AG04449 (cell line): ENCODE measurements at regions of chr7 and their contacts with region 1.

Region 1: GRCh38 chr7:93231799-93232672 is at the start of gene VPS50:
- DNase-seq: peak; percentile 68
- H3K4me3 ChIP-seq: peak within 1 kb of the TSS; percentile 92
- CTCF ChIP-seq: no peak

Region 2: GRCh38 chr7:92768501-92769393 is 463.3 kb before region 1 on chr7:
- CTCF ChIA-PET with region 1: no interaction called
- POLR2A ChIA-PET with region 1: no interaction called
- DNase-seq: no peak
- H3K4me3 ChIP-seq: no peak overlapping the region
- CTCF ChIP-seq: no peak

Region 3: GRCh38 chr7:93092757-93093370 is 139.2 kb before region 1 on chr7:
- CTCF ChIA-PET with region 1: interaction called, 129 read pairs
- POLR2A ChIA-PET with region 1: no interaction called
- DNase-seq: peak; percentile 21
- H3K4me3 ChIP-seq: no peak overlapping the region
- CTCF ChIP-seq: peak; percentile 49

Region 4: DNA sequence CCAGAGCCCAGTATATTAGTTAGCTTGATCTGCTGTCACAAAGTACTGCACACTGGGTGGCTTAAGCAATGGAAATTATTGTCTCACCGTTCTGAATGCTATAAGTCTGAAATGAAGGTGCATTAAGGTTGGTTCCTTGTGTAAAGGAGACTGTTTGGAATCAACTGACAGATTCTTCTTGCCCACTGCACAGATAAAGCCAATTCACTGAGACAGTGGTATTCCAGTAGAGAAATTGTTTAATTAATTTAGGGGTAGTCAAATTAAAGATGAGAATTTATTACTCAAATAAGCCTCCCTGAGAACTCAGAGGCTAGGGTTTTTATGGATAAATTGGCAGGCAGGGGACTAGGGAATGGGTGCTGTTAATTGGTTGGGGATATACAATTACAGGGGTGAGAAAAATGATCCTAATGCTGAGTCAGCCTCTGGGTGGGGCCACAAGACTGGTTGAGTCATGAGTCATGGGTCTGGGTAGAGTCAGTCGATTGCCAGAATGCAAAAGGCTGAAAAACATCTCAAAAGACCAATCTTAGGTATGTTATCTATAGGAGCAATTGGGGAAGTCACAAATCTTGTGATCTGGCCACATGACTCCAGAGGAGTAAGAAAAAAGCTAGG is 60.3 kb before region 1 on chr7:
- CTCF ChIA-PET with region 1: interaction called, 13 read pairs
- POLR2A ChIA-PET with region 1: no interaction called
- DNase-seq: no peak
- H3K4me3 ChIP-seq: no peak overlapping the region
- CTCF ChIP-seq: no peak

Region 5: GRCh38 chr7:93178212-93178611 is 53.8 kb before region 1 on chr7:
- CTCF ChIA-PET with region 1: interaction called, 33 read pairs
- POLR2A ChIA-PET with region 1: no interaction called
- DNase-seq: no peak
- H3K4me3 ChIP-seq: no peak overlapping the region
- CTCF ChIP-seq: no peak

Region 6: DNA sequence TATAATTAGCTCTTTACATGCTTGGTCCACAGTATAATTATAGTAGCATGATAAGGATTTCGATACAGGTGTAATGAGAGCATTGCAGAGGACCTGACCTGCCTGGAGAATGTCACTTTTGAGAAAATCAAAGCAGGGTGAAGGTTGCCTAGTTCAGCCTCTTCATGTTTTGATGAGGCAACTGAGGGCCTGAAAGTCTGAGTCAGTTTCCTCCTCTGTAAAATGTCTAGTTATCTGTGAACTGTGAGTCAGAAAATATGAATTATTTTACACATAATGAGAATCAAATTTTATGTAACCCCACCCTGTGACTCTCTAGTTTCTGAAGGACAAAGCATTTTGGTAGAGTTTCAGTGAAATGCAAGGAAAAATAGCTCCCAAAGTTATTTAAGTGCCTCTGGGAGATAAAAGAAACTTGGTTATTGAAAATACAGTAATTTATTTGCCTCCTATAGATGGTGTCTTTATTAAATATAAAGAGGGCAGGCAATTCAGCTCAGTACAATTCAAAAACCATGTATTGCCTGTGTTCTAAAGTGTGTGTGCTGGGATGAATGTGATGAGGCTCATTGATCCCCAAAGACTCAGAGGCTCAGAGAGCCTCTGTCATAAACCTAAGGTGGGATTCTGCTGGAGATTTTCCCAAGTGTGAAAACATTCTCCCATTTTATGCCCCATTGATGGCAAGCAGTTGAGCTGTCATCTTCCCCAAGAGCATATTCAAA is 46.6 kb before region 1 on chr7:
- CTCF ChIA-PET with region 1: interaction called, 33 read pairs
- POLR2A ChIA-PET with region 1: no interaction called
- DNase-seq: no peak
- H3K4me3 ChIP-seq: no peak overlapping the region
- CTCF ChIP-seq: no peak

Region 7: DNA sequence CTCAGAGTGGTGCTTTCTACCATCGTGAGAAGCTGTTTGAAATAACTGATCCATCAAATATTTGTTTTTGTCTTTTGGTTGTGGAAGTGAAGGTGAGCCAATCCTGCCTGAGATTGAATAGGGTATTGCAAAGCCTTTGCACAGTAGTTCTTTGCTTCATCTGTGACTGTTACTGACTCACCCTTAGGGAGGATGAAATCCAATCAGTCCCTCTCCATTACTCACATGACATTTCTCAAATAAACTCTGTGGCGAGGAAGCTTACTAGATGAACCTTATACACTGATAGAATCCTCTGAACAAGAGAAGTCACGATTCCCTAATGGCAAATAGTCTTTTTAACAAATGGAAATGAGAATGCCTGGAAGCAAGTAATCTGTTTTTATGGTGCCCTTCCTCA is 37.6 kb before region 1 on chr7:
- CTCF ChIA-PET with region 1: interaction called, 19 read pairs
- POLR2A ChIA-PET with region 1: no interaction called
- DNase-seq: no peak
- H3K4me3 ChIP-seq: no peak overlapping the region
- CTCF ChIP-seq: no peak

Region 8: DNA sequence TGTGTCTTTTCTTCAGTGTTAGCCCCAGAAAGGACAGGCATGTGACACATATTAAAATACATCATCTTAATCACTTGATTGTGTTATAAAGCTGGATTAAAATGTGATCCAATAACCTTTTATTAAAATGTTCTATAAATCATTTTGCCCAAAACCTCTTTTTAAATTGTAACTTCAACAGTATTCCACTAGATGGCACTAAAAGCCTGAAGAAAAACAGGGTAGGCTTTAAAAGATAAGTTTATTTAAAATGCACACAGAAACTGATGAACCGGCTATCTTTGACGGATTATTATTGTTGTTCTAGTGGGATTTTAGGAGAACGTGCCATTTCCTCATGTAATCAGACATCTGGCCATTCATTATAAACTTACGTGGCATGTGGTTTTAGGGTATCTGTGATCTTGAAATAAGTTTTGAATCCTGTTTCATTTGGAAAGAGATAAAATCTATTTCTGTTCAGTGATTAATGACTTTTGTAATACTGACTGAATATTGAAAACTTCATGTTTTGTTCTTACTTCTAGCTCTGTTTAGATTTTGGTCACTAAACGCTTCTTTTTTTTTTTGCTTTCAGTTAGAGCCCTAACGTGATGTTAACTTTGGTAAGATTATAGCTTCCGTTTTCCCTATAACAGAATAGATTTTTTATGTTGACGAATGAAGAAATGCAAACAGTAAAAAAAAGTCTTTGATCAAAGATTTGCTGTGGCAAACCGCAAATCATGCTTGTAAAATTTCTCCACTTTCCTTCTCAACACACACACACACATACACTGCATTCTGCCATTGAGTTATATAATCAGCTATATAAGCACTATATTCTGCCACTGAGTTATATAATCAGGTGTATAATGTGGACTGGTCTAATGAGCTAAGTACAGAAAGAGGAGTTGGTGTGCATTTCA is 13.7 kb after region 1 on chr7:
- CTCF ChIA-PET with region 1: interaction called, 22 read pairs
- POLR2A ChIA-PET with region 1: no interaction called
- DNase-seq: no peak
- H3K4me3 ChIP-seq: no peak overlapping the region
- CTCF ChIP-seq: peak; percentile 15